AG04449 (cell line): ENCODE measurements at regions of chr20 and their contacts with region 1.

Region 1: GRCh38 chr20:1790386-1790785 is 104.8 kb upstream of the SIRPA start:
- DNase-seq: no peak
- H3K4me3 ChIP-seq: no peak overlapping the region
- CTCF ChIP-seq: no peak

Region 2: GRCh38 chr20:1776681-1777475 is 13.5 kb before region 1 on chr20:
- CTCF ChIA-PET with region 1: interaction called, 50 read pairs
- POLR2A ChIA-PET with region 1: no interaction called
- DNase-seq: peak; percentile 37
- H3K4me3 ChIP-seq: peak overlapping the region; percentile 89
- CTCF ChIP-seq: peak; percentile 91

Region 3: DNA sequence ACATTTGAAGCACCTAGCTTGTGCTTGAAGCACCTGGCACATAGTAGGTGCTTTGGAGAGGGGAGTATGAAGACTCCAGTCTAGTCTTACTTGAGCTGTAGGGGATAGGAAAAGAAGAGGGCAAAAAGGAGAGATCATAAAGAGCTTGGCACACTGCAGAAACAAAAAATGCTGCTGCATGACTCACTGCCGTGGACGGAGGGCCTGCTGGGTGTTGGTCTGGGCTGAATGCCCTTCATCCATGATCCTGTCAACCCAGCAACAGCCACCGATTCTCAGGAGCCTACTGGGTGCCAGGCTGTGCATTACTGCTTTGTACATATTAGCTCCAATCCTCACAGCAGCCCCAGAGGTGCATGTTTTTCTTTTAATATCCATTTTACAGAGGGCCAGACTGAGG is 197.4 kb after region 1 on chr20:
- CTCF ChIA-PET with region 1: no interaction called
- POLR2A ChIA-PET with region 1: no interaction called
- DNase-seq: no peak
- H3K4me3 ChIP-seq: no peak overlapping the region
- CTCF ChIP-seq: no peak